ENCODE measurements at regions of chr6 and their contacts with region 1.

Region 1: DNA sequence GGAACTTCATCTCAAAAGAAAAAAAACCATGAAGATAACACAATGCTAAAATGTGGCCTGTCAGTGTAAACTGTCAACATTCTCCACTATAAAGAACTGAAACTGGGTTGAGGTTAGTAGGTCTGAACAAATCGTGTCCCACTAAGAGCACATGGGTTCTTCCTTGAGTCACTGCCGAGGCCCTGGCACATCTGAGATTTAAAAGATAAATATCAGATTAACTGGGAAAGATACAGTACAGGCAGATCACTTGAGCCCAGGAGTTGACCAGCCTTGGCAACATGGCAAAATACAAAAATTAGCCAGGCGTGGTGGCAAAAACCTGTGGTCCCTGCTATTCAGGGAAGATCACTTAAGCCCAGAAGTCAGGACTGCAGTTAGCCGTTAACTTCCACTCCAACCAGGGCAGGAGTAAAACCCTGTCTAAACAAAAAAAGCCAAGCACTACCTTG is 5.6 kb downstream of the EEF1A1 start:
- DNase-seq: peak; percentile 35
- ATAC-seq: no peak
- H3K4me3 ChIP-seq: no peak overlapping the region
- H3K27ac ChIP-seq: no peak overlapping the region
- H3K4me1 ChIP-seq: no peaks in the 10 kb centered on the region
- H3K27me3 ChIP-seq: no peaks in the 10 kb centered on the region
- CTCF ChIP-seq: no peak
- POLR2A ChIP-seq: no peak; the same call in 1 of the 2 replicates
- RAD21 ChIP-seq: no peak

Region 2: GRCh38 chr6:73580247-73581149 is 65.3 kb after region 1 on chr6:
- CTCF ChIA-PET with region 1: interaction called, 8 read pairs
- POLR2A ChIA-PET with region 1: interaction called, 35 read pairs
- dilution Hi-C with region 1: no loop called
- in situ Hi-C with region 1: loop called (anchors 5 kb)
- intact Hi-C with region 1: no loop called
- DNase-seq: peak; percentile 98
- ATAC-seq: peak; percentile 87
- H3K4me3 ChIP-seq: peak overlapping the region; percentile 36
- H3K27ac ChIP-seq: peak overlapping the region; percentile 98
- H3K4me1 ChIP-seq: peaks cover 14% of the 10 kb centered on the region
- H3K27me3 ChIP-seq: no peaks in the 10 kb centered on the region
- CTCF ChIP-seq: peak; percentile 46
- POLR2A ChIP-seq: peak; percentile 95
- RAD21 ChIP-seq: peak; percentile 33; the same call in 1 of the 2 replicates

Region 3: GRCh38 chr6:73610444-73611275 is 95.4 kb after region 1 on chr6:
- CTCF ChIA-PET with region 1: interaction called, 5 read pairs
- POLR2A ChIA-PET with region 1: interaction called, 7 read pairs
- dilution Hi-C with region 1: no loop called
- in situ Hi-C with region 1: no loop called
- intact Hi-C with region 1: loop called (anchors 1 kb)
- DNase-seq: peak; percentile 66
- ATAC-seq: peak; percentile 91
- H3K4me3 ChIP-seq: no peak overlapping the region
- H3K27ac ChIP-seq: peak overlapping the region; percentile 25; the same call in 1 of the 2 replicates
- H3K4me1 ChIP-seq: no peaks in the 10 kb centered on the region; the same call in 1 of the 2 replicates
- H3K27me3 ChIP-seq: no peaks in the 10 kb centered on the region
- CTCF ChIP-seq: peak; percentile 75
- POLR2A ChIP-seq: no peak
- RAD21 ChIP-seq: peak; percentile 71